ENCODE measurements at regions of chr2 and their contacts with region 1.

Region 1: DNA sequence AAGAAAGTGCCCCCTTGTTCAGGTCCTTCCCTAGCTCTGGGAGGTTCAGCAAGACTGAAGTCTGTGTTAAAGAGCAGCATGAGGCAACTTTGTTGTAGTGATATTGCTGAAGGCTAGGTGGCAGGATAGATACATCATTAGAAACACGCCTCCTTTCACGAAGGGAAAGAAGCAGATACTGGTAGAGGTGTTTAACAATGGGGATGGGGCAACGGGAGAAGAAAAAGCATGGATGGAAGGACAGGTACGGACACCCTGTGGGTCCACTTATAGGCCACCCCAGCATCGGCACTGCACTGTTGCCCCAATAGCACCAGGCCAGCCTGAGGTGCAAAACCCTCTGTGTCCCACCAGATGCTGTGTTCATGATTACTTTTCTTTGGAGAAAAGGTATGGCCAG is 3.5 kb upstream of the IGFBP5 start:
- DNase-seq: peak; percentile 68
- H3K4me3 Mint-ChIP-seq: no peak overlapping the region
- H3K27ac Mint-ChIP-seq: no peak overlapping the region
- H3K4me1 Mint-ChIP-seq: peaks cover 15% of the 10 kb centered on the region
- H3K27me3 Mint-ChIP-seq: no peaks in the 10 kb centered on the region
- CTCF ChIP-seq: peak; percentile 53

Region 2: GRCh38 chr2:216572582-216573578 is 126.0 kb before region 1 on chr2:
- CTCF ChIA-PET with region 1: no interaction called
- POLR2A ChIA-PET with region 1: no interaction called
- intact Hi-C with region 1: no loop called
- DNase-seq: no peak
- H3K4me3 Mint-ChIP-seq: no peak overlapping the region
- H3K27ac Mint-ChIP-seq: no peak overlapping the region
- H3K4me1 Mint-ChIP-seq: no peaks in the 10 kb centered on the region
- H3K27me3 Mint-ChIP-seq: no peaks in the 10 kb centered on the region
- CTCF ChIP-seq: no peak

Region 3: GRCh38 chr2:216713691-216714336 is 14.9 kb after region 1 on chr2:
- CTCF ChIA-PET with region 1: interaction called, 26 read pairs
- POLR2A ChIA-PET with region 1: no interaction called
- intact Hi-C with region 1: no loop called
- DNase-seq: peak; percentile 98
- H3K4me3 Mint-ChIP-seq: no peak overlapping the region
- H3K27ac Mint-ChIP-seq: peak overlapping the region; percentile 55
- H3K4me1 Mint-ChIP-seq: peaks cover 28% of the 10 kb centered on the region
- H3K27me3 Mint-ChIP-seq: no peaks in the 10 kb centered on the region
- CTCF ChIP-seq: no peak

Region 4: GRCh38 chr2:217142649-217143266 is 443.9 kb after region 1 on chr2:
- CTCF ChIA-PET with region 1: interaction called, 60 read pairs
- POLR2A ChIA-PET with region 1: no interaction called
- intact Hi-C with region 1: loop called (anchors 1 kb)
- DNase-seq: peak; percentile 55
- H3K4me3 Mint-ChIP-seq: no peak overlapping the region
- H3K27ac Mint-ChIP-seq: no peak overlapping the region
- H3K4me1 Mint-ChIP-seq: no peaks in the 10 kb centered on the region
- H3K27me3 Mint-ChIP-seq: peaks cover 8% of the 10 kb centered on the region
- CTCF ChIP-seq: peak; percentile 70

Region 5: DNA sequence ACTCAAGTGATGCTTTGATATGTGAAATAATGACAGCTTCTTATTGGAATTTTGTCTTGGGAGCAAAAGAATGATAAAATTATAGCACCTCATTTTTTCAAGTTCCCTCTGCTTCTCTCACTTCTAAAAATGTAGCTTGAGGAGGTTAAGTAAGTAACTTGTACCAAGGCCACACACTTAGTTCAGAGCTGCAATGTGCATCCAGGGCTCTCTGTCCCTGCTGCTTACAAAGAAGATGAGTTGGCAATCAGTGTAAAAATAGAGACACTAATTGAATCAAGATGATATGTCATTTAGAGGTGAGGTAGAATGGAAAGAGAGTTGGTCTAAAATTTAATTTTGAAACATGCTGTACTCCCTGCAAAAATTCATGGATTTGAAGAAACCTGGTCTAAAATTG is 473.0 kb after region 1 on chr2:
- CTCF ChIA-PET with region 1: interaction called, 59 read pairs
- POLR2A ChIA-PET with region 1: interaction called, 3 read pairs
- intact Hi-C with region 1: no loop called
- DNase-seq: no peak
- H3K4me3 Mint-ChIP-seq: no peak overlapping the region
- H3K27ac Mint-ChIP-seq: no peak overlapping the region
- H3K4me1 Mint-ChIP-seq: no peaks in the 10 kb centered on the region
- H3K27me3 Mint-ChIP-seq: no peaks in the 10 kb centered on the region
- CTCF ChIP-seq: no peak

Region 6: DNA sequence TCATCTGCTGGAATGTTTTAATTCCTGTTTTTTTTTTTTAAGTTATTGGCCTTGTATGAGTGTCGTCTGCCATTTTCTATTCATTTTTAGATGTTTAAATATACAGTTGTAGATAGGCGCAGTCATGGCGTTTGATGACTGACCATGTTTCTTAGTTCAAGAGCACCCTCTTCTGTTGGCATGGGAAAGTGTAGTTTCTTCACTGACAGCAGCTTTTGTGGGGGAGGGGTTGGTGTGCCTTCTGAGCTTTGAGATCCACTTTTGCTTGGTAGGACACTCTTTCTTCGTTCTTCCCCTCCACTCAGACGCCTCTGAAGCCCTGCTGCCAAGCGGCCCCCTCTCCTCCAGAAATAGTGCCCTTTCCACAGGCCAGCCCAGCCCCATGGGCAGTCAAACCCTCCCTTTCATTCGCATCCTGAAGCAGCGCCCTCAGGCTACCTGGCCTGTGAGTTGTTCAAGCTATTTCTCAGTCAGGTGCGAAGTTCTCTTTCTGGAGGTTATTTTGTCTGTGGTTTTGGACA is 811.9 kb after region 1 on chr2:
- CTCF ChIA-PET with region 1: interaction called, 62 read pairs
- POLR2A ChIA-PET with region 1: interaction called, 4 read pairs
- intact Hi-C with region 1: loop called (anchors 1 kb)
- DNase-seq: peak; percentile 79
- H3K4me3 Mint-ChIP-seq: no peak overlapping the region
- H3K27ac Mint-ChIP-seq: peak overlapping the region; percentile 52
- H3K4me1 Mint-ChIP-seq: no peaks in the 10 kb centered on the region
- H3K27me3 Mint-ChIP-seq: no peaks in the 10 kb centered on the region
- CTCF ChIP-seq: peak; percentile 80